ENCODE measurements at regions of chr11 and their contacts with region 1.

Region 1: GRCh38 chr11:20127671-20128527 is 32.4 kb downstream of the DBX1 start:
- DNase-seq: peak; percentile 44 to 84 (median 73)
- ATAC-seq: peak; percentile 71
- H3K4me3 ChIP-seq: no peak overlapping the region
- H3K4me3 Mint-ChIP-seq: no peak overlapping the region
- H3K27ac ChIP-seq: no peak overlapping the region
- H3K27ac Mint-ChIP-seq: no peak overlapping the region
- H3K4me1 ChIP-seq: peaks cover 6% of the 10 kb centered on the region
- H3K4me1 Mint-ChIP-seq: peaks cover 8% of the 10 kb centered on the region
- H3K27me3 ChIP-seq: no peaks in the 10 kb centered on the region
- H3K27me3 Mint-ChIP-seq: peaks cover 14% of the 10 kb centered on the region
- CTCF ChIP-seq: peak; percentile 80

Region 2: DNA sequence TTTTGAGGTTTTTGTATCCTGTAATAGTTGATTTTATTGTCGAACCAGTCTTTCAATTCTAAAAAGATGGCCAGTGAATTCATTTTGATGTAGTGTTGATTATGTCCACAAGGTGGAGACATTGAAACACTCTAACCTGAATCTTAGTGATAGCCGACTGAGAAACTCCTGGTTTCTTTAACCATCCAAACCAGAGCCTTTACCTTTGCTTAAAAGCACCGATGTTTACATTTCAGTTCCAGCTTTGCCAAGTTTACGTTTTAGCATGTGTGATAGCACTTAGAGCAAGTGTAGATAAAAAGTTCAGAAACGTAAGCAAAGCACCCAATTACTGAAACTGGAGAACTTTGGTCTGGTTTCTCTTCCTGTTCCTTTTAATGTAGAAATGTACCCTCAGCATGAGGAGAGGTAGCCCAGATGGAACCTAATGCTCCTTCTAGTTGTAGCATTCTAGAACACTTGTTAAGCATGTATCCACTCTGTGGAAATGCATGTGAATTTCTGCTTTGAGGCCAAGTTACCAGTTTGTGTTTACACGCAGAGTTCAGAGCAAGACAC is 176.3 kb before region 1 on chr11:
- CTCF ChIA-PET with region 1: interaction called, 4 read pairs
- POLR2A ChIA-PET with region 1: no interaction called
- intact Hi-C with region 1: loop called (anchors 2 to 5 kb)
- DNase-seq: peak in 2 of 9 experiments; percentile 49 to 66
- ATAC-seq: peak; percentile 51
- H3K4me3 ChIP-seq: no peak overlapping the region
- H3K4me3 Mint-ChIP-seq: peak overlapping the region; percentile 57
- H3K27ac ChIP-seq: no peak overlapping the region
- H3K27ac Mint-ChIP-seq: no peak overlapping the region
- H3K4me1 ChIP-seq: no peaks in the 10 kb centered on the region
- H3K4me1 Mint-ChIP-seq: peaks cover 4% of the 10 kb centered on the region
- H3K27me3 ChIP-seq: no peaks in the 10 kb centered on the region
- H3K27me3 Mint-ChIP-seq: peaks cover 11% of the 10 kb centered on the region
- CTCF ChIP-seq: peak; percentile 71

Region 3: GRCh38 chr11:20158597-20159257 is 30.8 kb after region 1 on chr11:
- CTCF ChIA-PET with region 1: interaction called, 13 read pairs
- POLR2A ChIA-PET with region 1: no interaction called
- intact Hi-C with region 1: no loop called
- DNase-seq: peak in 1 of 9 experiments; percentile 11
- ATAC-seq: no peak
- H3K4me3 ChIP-seq: no peak overlapping the region
- H3K4me3 Mint-ChIP-seq: no peak overlapping the region
- H3K27ac ChIP-seq: no peak overlapping the region
- H3K27ac Mint-ChIP-seq: no peak overlapping the region
- H3K4me1 ChIP-seq: peaks cover 19% of the 10 kb centered on the region
- H3K4me1 Mint-ChIP-seq: peaks cover 34% of the 10 kb centered on the region
- H3K27me3 ChIP-seq: peaks cover 55 to 56% of the 10 kb centered on the region in 2 experiments
- H3K27me3 Mint-ChIP-seq: peaks cover 70% of the 10 kb centered on the region
- CTCF ChIP-seq: no peak

Region 4: DNA sequence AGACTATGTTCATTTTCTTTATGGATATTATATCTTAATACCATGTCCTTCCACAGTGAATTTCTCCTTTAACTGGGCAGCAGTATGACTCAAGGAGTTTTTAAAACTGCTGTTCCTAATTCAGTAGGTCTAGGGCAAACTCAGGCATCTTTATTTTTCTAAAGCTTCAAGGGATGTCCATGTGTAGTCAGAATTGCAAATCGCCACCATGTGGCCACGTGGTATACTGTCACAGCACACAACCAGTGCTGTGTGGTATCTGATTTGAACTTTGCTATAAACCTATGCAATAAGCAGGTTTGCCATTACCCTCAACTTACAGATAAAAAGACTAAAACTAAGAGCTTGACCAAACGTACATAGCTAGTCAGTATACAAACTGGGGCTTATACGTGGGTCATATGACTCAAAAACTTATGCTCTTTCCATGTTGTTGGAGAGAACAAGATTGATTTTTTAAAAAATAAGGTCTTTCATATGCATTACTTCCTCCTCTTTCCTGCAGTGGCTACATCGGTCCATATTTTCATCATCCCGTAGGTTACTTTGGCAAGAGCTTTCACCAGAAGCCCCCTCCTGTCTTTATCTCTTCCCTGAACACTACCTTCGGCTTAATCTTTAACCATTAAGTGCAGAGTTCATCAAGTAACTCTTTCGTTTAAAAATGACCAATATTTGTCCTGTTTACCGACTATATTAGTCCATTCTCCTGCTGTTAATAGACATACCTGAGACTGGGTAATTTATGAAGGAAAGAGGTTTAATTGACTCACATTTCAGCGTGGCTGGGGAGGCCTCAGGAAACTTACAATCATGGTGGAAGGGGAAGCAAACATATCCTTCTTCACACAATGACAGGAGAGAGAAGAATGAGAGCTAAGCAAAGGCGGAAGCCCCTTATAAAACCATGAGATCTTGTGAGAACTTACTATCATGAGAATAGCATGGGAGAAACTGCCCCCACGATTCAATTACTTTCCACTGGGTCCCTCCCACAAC is 227.6 kb after region 1 on chr11:
- CTCF ChIA-PET with region 1: interaction called, 89 read pairs
- POLR2A ChIA-PET with region 1: no interaction called
- intact Hi-C with region 1: loop called in 1 of 2 experiments (anchors 1 kb)
- DNase-seq: peak in 6 of 9 experiments; percentile 14 to 67 (median 37)
- ATAC-seq: peak; percentile 80
- H3K4me3 ChIP-seq: no peak overlapping the region
- H3K4me3 Mint-ChIP-seq: no peak overlapping the region
- H3K27ac ChIP-seq: no peak overlapping the region
- H3K27ac Mint-ChIP-seq: no peak overlapping the region
- H3K4me1 ChIP-seq: peaks cover 3% of the 10 kb centered on the region
- H3K4me1 Mint-ChIP-seq: peaks cover 12% of the 10 kb centered on the region
- H3K27me3 ChIP-seq: no peaks in the 10 kb centered on the region
- H3K27me3 Mint-ChIP-seq: no peaks in the 10 kb centered on the region
- CTCF ChIP-seq: peak; percentile 62

Region 5: GRCh38 chr11:20443596-20443995 is 315.7 kb after region 1 on chr11:
- CTCF ChIA-PET with region 1: interaction called, 4 read pairs
- POLR2A ChIA-PET with region 1: no interaction called
- intact Hi-C with region 1: loop called (anchors 2 kb)
- DNase-seq: peak in 2 of 9 experiments; percentile 4 to 22
- ATAC-seq: no peak
- H3K4me3 ChIP-seq: no peak overlapping the region
- H3K4me3 Mint-ChIP-seq: no peak overlapping the region
- H3K27ac ChIP-seq: no peak overlapping the region
- H3K27ac Mint-ChIP-seq: no peak overlapping the region
- H3K4me1 ChIP-seq: no peaks in the 10 kb centered on the region
- H3K4me1 Mint-ChIP-seq: no peaks in the 10 kb centered on the region
- H3K27me3 ChIP-seq: no peaks in the 10 kb centered on the region
- H3K27me3 Mint-ChIP-seq: no peaks in the 10 kb centered on the region
- CTCF ChIP-seq: peak; percentile 32

Region 6: DNA sequence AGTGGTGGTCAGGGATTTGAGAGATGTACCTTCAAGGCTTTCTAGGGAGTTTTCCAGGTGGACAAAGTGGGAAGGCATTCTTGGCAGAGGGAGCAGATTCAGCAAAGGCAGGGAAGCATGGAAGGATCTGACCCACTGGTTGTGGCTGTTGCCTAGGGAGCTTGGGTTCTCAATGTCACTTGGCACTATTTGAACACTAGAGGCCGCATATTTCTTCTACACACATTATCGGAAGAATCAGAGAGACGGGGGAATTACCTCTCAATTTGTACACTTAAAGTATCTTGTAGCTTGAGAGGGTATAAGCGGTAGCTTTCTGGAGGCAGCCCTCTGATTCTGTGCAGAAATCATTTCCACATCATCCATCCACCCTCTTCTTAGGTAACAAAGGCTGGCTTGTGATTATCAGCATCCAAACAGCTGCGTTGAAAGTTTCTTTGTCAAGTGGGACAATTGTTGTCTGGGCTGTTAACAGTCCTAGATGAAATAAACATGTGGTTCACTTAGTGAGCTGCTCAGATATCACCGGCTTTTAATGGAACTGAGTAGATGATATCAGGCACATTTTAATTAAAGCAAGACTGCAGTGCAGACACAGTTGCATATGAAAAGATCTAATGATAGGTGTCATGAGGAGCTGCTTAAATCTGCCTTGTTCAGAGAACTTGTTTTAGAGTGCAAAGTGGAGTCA is 544.1 kb after region 1 on chr11:
- CTCF ChIA-PET with region 1: no interaction called
- POLR2A ChIA-PET with region 1: no interaction called
- intact Hi-C with region 1: loop called in 1 of 2 experiments (anchors 2 kb)
- DNase-seq: no peak
- ATAC-seq: no peak
- H3K4me3 ChIP-seq: no peak overlapping the region
- H3K4me3 Mint-ChIP-seq: no peak overlapping the region
- H3K27ac ChIP-seq: no peak overlapping the region
- H3K27ac Mint-ChIP-seq: no peak overlapping the region
- H3K4me1 ChIP-seq: peaks cover 3% of the 10 kb centered on the region
- H3K4me1 Mint-ChIP-seq: peaks cover 9% of the 10 kb centered on the region
- H3K27me3 ChIP-seq: peaks cover 0 to 4% of the 10 kb centered on the region in 2 experiments
- H3K27me3 Mint-ChIP-seq: peaks cover 68% of the 10 kb centered on the region
- CTCF ChIP-seq: no peak

Measured in CD8-positive, alpha-beta T cell (primary cell).